Dorsolateral prefrontal cortex (tissue), 120 donors: ENCODE measurements at regions of chr7 and their contacts with region 1.

Region 1: GRCh38 chr7:49228426-49229098 is 304.2 kb downstream of the CDC14C start:
- DNase-seq: no peak
- H3K4me3 ChIP-seq: no peak overlapping the region
- H3K27ac ChIP-seq: no peak overlapping the region
- H3K27me3 ChIP-seq: no peaks in the 10 kb centered on the region
- CTCF ChIP-seq: no peak

Region 2: DNA sequence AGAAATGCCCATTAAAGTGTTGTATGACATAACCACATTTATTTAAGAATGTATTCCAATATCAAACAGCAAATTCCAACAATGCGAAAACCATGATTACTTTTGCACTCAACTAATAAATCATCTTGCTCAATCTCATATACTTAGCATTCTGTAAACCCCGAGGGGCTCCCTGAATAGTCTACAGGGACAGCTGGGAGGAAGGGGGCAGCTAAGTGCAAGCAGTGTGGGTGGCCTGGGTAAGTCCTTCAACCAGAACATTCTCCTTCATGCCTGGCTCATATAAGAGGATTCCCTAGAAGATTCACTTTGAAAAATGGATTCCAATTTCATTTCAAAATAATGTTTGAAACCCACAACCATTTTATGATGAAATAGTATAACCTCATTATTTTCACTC is 51.3 kb after region 1 on chr7:
- intact Hi-C with region 1: loop called in 1 of 2 experiments (anchors 10 kb)
- DNase-seq: no peak
- H3K4me3 ChIP-seq: no peak overlapping the region
- H3K27ac ChIP-seq: no peak overlapping the region
- H3K27me3 ChIP-seq: peaks cover 0 to 2% (median 0%) of the 10 kb centered on the region in 45 donors
- CTCF ChIP-seq: no peak

Region 3: GRCh38 chr7:49367072-49367471 is 138.5 kb after region 1 on chr7:
- intact Hi-C with region 1: no loop called
- DNase-seq: no peak
- H3K4me3 ChIP-seq: no peak overlapping the region
- H3K27ac ChIP-seq: no peak overlapping the region
- H3K27me3 ChIP-seq: no peaks in the 10 kb centered on the region
- CTCF ChIP-seq: no peak

Region 4: GRCh38 chr7:49386792-49387191 is 158.2 kb after region 1 on chr7:
- intact Hi-C with region 1: no loop called
- DNase-seq: no peak
- H3K4me3 ChIP-seq: no peak overlapping the region
- H3K27ac ChIP-seq: no peak overlapping the region
- H3K27me3 ChIP-seq: peaks cover 0 to 10% (median 0%) of the 10 kb centered on the region in 45 donors
- CTCF ChIP-seq: no peak